K562 (cell line): ENCODE measurements at regions of chr6 and their contacts with region 1.

Region 1: DNA sequence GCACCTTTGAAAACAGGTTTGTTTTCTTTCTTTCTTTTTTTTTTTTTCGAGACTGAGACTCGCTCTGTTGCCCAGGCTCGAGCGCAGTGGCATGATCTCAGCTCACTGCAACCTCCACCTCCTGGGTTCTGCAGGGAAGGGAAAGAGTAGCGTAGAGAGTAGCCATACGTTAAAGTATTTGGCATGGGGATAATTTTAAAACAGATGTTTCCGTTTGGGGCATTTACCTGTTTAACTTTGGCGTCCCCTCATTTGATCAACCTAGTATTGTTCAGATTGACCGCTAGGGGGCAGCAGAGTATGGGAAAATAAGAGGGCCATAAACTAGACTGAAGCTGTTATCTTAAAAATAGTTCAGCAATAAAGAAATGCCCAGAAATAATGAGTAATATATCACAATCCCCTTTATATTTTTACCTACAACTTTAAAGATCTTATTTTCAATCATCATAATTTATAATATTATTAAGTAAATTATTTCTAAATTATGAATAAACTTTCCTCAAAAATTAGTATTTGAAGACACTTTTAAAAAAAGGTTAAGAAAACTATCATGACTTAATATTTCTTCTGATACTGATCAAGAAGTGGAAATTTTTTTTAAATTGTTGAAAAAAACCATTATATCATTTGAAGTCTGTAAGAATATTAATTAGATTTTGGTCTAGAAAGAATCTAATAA is 7.6 kb upstream of the TAAR9 start:
- DNase-seq: peak; percentile 29 to 81 (median 55)
- ATAC-seq: peak; percentile 95
- H3K4me3 ChIP-seq: no peak overlapping the region
- H3K27ac ChIP-seq: no peak overlapping the region
- H3K4me1 ChIP-seq: no peaks in the 10 kb centered on the region; a peak in 1 of 5 replicates
- H3K27me3 ChIP-seq: peaks cover 7 to 9% of the 10 kb centered on the region in 2 experiments; a peak in 3 of 5 replicates
- CTCF ChIP-seq: peak; percentile 60 to 83 (median 62); a peak in 5 of 6 replicates
- EP300 ChIP-seq: no peak
- POLR2A ChIP-seq: no peak
- RAD21 ChIP-seq: peak; percentile 70 to 73

Region 2: GRCh38 chr6:132715204-132715603 is 184.8 kb after region 1 on chr6:
- CTCF ChIA-PET with region 1: no interaction called
- POLR2A ChIA-PET with region 1: no interaction called
- in situ Hi-C with region 1: no loop called
- intact Hi-C with region 1: loop called (anchors 2 kb)
- DNase-seq: peak in 3 of 4 experiments; percentile 15 to 45 (median 43)
- ATAC-seq: peak; percentile 93
- H3K4me3 ChIP-seq: no peak overlapping the region
- H3K27ac ChIP-seq: no peak overlapping the region
- H3K4me1 ChIP-seq: no peaks in the 10 kb centered on the region
- H3K27me3 ChIP-seq: peaks cover 0 to 20% of the 10 kb centered on the region in 2 experiments; a peak in 2 of 5 replicates
- CTCF ChIP-seq: peak; percentile 42 to 45 (median 43); a peak in 5 of 6 replicates
- EP300 ChIP-seq: no peak
- POLR2A ChIP-seq: no peak
- RAD21 ChIP-seq: peak in 1 of 2 experiments; percentile 56; a peak in 2 of 4 replicates

Region 3: DNA sequence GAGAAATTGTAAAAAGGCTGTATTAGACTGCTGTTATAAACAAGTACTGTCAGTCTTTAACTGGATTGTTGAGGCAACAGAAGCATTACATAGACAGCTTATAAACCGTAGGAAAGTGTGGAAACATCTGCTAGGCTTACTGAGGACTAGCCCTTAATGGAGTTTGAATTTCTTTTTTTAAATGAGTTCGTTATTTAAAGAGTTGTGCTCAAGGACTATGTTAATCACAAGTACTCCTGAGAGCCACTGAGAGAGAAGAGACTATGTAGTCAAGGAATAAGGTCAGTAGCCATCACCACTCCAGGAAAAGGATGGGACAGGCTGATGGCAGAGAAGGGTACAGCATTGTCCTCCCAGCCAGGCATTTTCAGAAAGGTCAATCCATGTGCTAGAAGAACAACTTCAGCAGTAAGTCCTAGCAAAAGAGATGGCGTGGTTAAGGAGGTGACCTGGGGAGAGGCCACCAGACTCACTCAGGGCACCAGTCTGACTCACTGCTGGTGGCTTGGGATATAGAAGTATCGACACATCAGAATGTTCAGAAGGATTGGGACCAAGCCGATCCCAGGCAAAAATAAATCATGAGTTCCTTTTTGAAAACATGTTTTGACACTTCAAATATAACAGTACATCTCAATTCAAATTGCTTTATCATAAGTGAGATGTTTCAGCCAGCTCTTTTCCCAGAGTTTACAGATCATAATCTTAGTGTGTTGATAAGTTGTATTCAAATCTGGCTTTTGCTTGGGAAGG is 290.4 kb after region 1 on chr6:
- CTCF ChIA-PET with region 1: interaction called, 4 read pairs
- POLR2A ChIA-PET with region 1: interaction called, 3 read pairs
- in situ Hi-C with region 1: no loop called
- intact Hi-C with region 1: loop called (anchors 5 kb)
- DNase-seq: peak in 2 of 4 experiments; percentile 40 to 59
- ATAC-seq: peak; percentile 21
- H3K4me3 ChIP-seq: no peak overlapping the region
- H3K27ac ChIP-seq: peak overlapping the region; percentile 5; the same call in 1 of the 3 replicates
- H3K4me1 ChIP-seq: peaks cover 0 to 24% of the 10 kb centered on the region in 2 experiments; a peak in 2 of 5 replicates
- H3K27me3 ChIP-seq: no peaks in the 10 kb centered on the region
- CTCF ChIP-seq: no peak
- EP300 ChIP-seq: no peak
- POLR2A ChIP-seq: peak; percentile 67
- RAD21 ChIP-seq: no peak

Region 4: GRCh38 chr6:133548414-133549159 is 1018.2 kb after region 1 on chr6:
- CTCF ChIA-PET with region 1: no interaction called
- POLR2A ChIA-PET with region 1: no interaction called
- in situ Hi-C with region 1: loop called (anchors 25 kb)
- intact Hi-C with region 1: loop called (anchors 5 kb)
- DNase-seq: no peak
- ATAC-seq: no peak
- H3K4me3 ChIP-seq: no peak overlapping the region
- H3K27ac ChIP-seq: no peak overlapping the region
- H3K4me1 ChIP-seq: no peaks in the 10 kb centered on the region
- H3K27me3 ChIP-seq: no peaks in the 10 kb centered on the region
- CTCF ChIP-seq: no peak
- EP300 ChIP-seq: no peak
- POLR2A ChIP-seq: no peak
- RAD21 ChIP-seq: no peak

Region 5: DNA sequence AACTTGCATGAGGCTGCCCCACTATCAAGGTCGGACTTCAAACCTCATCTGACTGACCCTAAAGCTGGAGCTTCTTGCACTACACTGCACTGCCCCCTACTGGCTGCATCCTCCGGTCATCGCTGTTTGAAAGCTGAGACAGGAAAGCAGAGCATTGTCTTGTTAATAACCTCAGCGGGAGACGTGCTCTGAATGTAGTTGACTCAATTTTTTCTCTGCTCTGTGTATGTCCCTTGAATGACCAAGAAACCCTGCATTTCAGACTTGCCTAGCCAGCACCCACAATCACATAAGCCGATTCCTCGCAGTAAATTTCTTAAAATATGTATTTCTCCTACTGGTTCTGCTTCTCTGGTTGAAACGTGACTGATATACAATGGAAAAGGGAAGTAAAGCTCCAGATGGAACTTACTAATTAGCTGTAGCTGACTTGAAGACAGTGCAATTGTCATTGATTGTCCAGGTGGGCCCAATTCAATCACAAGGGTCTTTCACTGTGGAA is 1386.3 kb after region 1 on chr6:
- CTCF ChIA-PET with region 1: no interaction called
- POLR2A ChIA-PET with region 1: no interaction called
- in situ Hi-C with region 1: no loop called
- intact Hi-C with region 1: loop called (anchors 10 kb)
- DNase-seq: peak; percentile 68 to 89 (median 71)
- ATAC-seq: peak; percentile 94
- H3K4me3 ChIP-seq: no peak overlapping the region
- H3K27ac ChIP-seq: no peak overlapping the region
- H3K4me1 ChIP-seq: no peaks in the 10 kb centered on the region
- H3K27me3 ChIP-seq: no peaks in the 10 kb centered on the region; a peak in 1 of 5 replicates
- CTCF ChIP-seq: peak; percentile 88 to 92 (median 92)
- EP300 ChIP-seq: no peak
- POLR2A ChIP-seq: no peak
- RAD21 ChIP-seq: peak; percentile 90 to 92